ENCODE measurements at regions of chr9 and their contacts with region 1.

Region 1: DNA sequence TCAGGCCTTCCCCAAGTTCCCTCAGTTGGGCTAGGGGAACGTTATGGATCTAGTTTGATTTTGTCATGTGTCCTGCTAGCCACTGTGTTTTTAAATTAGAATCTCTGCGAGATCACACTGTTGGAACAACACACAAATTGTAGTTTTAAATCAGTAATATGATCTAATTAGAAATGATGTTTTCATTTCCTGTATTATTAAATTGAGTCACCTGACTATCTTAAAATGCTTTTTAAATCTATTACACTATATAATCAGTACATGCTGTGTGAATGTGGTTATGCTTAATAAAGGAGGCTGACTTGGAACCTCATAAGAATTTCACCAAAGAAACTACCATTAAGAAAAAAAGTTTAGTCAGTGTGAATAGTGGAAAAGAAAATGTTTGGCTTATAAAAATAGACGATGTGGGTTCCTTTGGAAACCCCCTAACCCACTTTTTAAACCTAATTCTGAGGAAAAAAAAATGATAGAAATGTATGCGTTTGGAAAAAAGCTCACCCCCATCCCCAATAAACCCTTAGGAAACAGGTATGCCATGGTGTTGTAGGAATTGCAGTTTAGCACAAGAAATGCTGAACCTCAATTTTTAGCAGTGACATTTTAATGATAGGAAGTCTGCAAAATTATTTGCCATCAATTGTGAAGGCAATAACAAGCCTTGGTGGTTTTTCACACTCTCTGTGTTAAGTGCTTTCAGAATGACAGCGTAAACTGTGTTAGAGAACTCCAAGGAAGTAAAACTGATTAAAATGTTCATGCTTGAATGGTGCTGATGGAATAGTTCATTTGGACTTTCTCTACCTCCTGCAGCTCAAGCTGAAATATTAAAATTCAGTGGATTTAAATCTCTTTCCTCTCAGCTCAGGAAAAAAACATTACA is 59.0 kb downstream of the TLE4 start:
- DNase-seq: no peak
- H3K4me3 Mint-ChIP-seq: peak overlapping the region; percentile 25
- H3K27ac Mint-ChIP-seq: peak overlapping the region; percentile 75
- H3K4me1 Mint-ChIP-seq: peaks cover 29% of the 10 kb centered on the region
- H3K27me3 Mint-ChIP-seq: no peaks in the 10 kb centered on the region

Region 2: GRCh38 chr9:79686381-79687130 is 55.8 kb after region 1 on chr9:
- intact Hi-C with region 1: loop called (anchors 5 kb)
- DNase-seq: no peak
- H3K4me3 Mint-ChIP-seq: peak overlapping the region; percentile 18
- H3K27ac Mint-ChIP-seq: peak overlapping the region; percentile 69
- H3K4me1 Mint-ChIP-seq: peaks cover 17% of the 10 kb centered on the region
- H3K27me3 Mint-ChIP-seq: no peaks in the 10 kb centered on the region

Region 3: GRCh38 chr9:79709743-79710674 is 79.2 kb after region 1 on chr9:
- intact Hi-C with region 1: no loop called
- DNase-seq: no peak
- H3K4me3 Mint-ChIP-seq: no peak overlapping the region
- H3K27ac Mint-ChIP-seq: no peak overlapping the region
- H3K4me1 Mint-ChIP-seq: peaks cover 8% of the 10 kb centered on the region
- H3K27me3 Mint-ChIP-seq: no peaks in the 10 kb centered on the region

Region 4: GRCh38 chr9:79812507-79813257 is 181.9 kb after region 1 on chr9:
- intact Hi-C with region 1: loop called (anchors 2 kb)
- DNase-seq: peak; percentile 62
- H3K4me3 Mint-ChIP-seq: peak overlapping the region; percentile 72
- H3K27ac Mint-ChIP-seq: no peak overlapping the region
- H3K4me1 Mint-ChIP-seq: peaks cover 17% of the 10 kb centered on the region
- H3K27me3 Mint-ChIP-seq: peaks cover 6% of the 10 kb centered on the region